Upper lobe of right lung (tissue), 1 donor: ENCODE measurements at regions of chr7 and their contacts with region 1.

Region 1: DNA sequence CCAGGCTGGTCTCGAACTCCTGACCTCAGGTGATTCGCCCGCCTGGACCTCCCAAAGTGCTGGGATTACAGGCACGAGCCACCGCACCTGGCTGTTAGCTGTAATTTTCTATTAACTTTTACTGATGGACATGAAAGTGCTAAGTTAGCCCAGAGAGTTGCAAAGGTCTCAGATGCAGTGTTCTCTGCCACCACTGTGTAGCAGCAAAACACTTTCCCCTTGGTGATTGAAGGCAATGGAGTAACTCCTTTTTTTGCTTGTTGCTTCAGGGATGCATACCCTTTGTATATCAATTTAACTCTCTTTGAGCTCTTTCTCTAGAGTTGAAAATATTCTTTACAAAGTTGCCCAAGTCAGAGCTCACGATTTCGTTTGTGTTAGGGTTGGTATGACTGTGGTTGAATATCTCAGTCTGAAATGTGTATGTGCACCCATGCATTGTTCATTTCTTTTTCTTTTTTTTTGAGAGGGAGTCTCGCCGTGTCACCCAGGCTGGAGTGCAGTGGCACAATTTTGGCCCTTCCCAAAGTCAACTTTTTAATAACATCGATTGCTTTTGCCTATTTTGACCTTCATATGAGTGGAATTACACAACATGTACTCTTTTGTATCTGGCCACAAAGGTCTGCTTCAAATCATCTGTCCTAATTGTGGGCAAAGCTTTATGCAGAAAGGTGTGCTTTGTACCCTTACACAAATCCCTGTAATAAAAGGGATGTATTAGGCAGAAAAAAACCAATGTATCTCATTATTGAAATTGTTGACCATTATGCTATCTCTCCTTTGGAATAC is 52.6 kb downstream of the GTF2I start:
- DNase-seq: no peak
- ATAC-seq: no peak
- H3K4me3 ChIP-seq: no peak overlapping the region
- H3K27ac ChIP-seq: no peak overlapping the region
- H3K4me1 ChIP-seq: no peaks in the 10 kb centered on the region
- H3K27me3 ChIP-seq: no peaks in the 10 kb centered on the region
- CTCF ChIP-seq: no peak

Region 2: DNA sequence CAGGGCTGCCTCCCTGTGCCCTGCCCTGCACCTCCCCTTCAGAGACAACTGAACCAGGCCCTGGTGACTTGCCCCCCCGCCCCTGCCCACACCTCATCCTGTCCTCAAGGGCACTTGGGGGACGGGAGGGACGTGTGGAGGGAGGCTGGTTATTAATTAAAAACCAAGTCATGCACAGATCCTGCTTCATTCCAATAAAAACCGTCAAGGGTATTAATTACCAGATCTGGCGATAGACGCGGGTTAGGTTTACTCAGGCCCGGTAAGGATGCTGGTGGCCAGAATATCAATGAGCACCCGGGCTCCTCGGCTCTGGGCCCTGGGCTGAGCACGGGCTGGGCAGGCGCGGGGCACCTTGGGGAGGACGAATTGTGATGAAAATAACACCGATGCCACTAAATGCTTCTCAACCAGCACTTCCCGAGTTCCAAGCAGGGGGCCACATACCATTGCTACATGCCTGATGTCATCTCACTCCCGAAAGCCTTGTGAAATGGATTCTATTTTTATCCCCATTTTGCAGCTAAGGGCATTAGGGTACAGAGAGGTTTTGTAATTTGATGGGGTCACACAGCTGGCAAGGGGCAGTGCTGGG is 280.8 kb before region 1 on chr7:
- intact Hi-C with region 1: loop called (anchors 10 kb)
- DNase-seq: no peak
- ATAC-seq: peak; percentile 61
- H3K4me3 ChIP-seq: no peak overlapping the region
- H3K27ac ChIP-seq: no peak overlapping the region
- H3K4me1 ChIP-seq: no peaks in the 10 kb centered on the region
- H3K27me3 ChIP-seq: no peaks in the 10 kb centered on the region
- CTCF ChIP-seq: no peak